ENCODE measurements at regions of chr2 and their contacts with region 1.

Region 1: DNA sequence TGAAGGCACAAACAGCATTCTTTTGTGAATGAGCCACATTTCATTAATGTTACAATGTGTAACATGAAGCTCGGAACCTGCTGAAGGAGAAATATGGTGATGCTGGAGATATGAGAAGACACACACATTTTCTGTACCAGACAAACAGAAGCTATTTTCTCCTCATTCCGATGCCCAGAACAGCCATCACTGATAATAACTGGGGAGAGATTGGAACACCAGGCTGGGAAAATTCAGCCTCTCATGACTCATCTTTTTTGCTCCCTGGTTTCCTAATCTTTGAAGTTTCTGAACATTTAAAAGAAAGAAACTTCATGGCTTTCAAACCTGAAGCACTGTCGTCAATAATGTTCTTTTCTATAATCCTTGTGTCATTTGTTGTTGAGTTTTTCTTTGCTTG is 110.9 kb downstream of the LYPD6 start:
- DNase-seq: no peak
- ATAC-seq: no peak
- H3K4me3 ChIP-seq: no peak overlapping the region
- H3K4me3 Mint-ChIP-seq: no peak overlapping the region
- H3K27ac ChIP-seq: no peak overlapping the region
- H3K27ac Mint-ChIP-seq: no peak overlapping the region
- H3K4me1 ChIP-seq: no peaks in the 10 kb centered on the region
- H3K4me1 Mint-ChIP-seq: no peaks in the 10 kb centered on the region
- H3K27me3 ChIP-seq: no peaks in the 10 kb centered on the region
- H3K27me3 Mint-ChIP-seq: peaks cover 3 to 18% (median 7%) of the 10 kb centered on the region in 5 donors

Region 2: DNA sequence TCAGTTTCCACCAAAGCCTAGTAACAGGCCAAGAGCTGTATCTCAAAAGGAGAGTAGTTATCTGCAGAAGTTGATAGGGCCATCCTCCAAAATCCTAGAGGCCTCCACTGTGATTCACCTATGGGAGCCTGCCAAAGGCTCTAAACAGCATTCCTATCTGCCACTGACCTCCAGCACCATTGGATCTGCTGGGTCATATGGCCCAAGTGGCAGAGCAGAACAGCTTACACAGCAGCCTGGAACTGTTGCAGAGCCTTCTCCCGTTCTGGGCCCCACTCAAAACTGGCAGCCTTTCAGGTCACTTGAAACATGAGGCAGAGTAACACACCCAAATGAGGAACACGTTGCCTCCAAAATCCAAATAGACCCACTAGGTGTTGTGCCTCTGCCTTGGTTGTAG is 1391.4 kb after region 1 on chr2:
- CTCF ChIA-PET with region 1: no interaction called
- POLR2A ChIA-PET with region 1: no interaction called
- intact Hi-C with region 1: loop called in 1 of 2 experiments (anchors 5 kb)
- DNase-seq: no peak
- ATAC-seq: no peak
- H3K4me3 ChIP-seq: no peak overlapping the region
- H3K4me3 Mint-ChIP-seq: no peak overlapping the region
- H3K27ac ChIP-seq: no peak overlapping the region
- H3K27ac Mint-ChIP-seq: no peak overlapping the region
- H3K4me1 ChIP-seq: no peaks in the 10 kb centered on the region
- H3K4me1 Mint-ChIP-seq: no peaks in the 10 kb centered on the region
- H3K27me3 ChIP-seq: no peaks in the 10 kb centered on the region
- H3K27me3 Mint-ChIP-seq: peaks cover 0 to 3% (median 0%) of the 10 kb centered on the region in 5 donors

Measured in naive thymus-derived CD4-positive, alpha-beta T cell (primary cell).